Caco-2 (cell line): ENCODE measurements at regions of chr12 and their contacts with region 1.

Region 1: DNA sequence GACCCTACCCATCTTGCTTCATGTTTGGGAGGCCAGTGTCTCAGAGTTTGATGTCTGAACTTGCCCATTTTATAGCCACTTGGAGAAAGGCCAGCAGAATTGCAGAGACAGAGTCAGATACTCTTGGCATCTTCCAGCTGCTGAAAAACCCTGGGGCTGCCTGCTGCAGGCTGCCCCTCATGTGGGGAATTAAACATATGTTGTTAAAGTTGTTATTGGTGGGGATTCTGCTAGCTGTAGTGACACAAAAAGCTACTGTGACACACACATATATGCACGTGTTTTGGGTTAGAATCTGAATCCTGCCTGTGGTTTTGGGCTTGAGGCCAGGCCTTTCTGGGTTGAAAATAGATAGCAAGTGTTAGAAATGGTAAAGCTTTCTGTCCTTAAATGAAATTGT is 1288.4 kb downstream of the AACS start:
- DNase-seq: no peak
- H3K4me3 ChIP-seq: no peak overlapping the region
- H3K4me3 Mint-ChIP-seq: no peak overlapping the region
- H3K27ac Mint-ChIP-seq: no peak overlapping the region
- H3K4me1 ChIP-seq: no peaks in the 10 kb centered on the region
- H3K4me1 Mint-ChIP-seq: no peaks in the 10 kb centered on the region
- H3K27me3 ChIP-seq: no peaks in the 10 kb centered on the region
- H3K27me3 Mint-ChIP-seq: no peaks in the 10 kb centered on the region
- CTCF ChIP-seq: no peak

Region 2: DNA sequence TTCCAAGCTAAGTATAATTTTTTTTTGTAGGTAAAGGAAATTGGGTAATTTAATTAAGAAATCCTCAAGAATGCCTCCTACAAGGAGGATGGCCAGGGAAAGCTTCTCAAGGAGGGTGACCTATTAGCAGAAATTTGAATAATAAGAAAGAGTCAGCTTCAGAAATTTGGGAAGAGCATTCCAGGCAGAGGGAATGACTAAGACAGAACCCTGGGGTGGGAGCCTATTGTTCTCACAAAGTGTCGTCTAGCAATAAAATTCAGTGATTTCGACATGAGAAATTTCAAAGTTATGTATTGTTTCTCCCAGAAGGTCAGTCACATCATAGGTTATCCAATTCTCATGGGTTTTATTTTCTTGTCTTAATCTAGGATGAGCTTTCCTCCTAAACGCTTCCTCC is 120.0 kb before region 1 on chr12:
- CTCF ChIA-PET with region 1: no interaction called
- POLR2A ChIA-PET with region 1: no interaction called
- intact Hi-C with region 1: no loop called
- DNase-seq: no peak
- H3K4me3 ChIP-seq: no peak overlapping the region
- H3K4me3 Mint-ChIP-seq: no peak overlapping the region
- H3K27ac Mint-ChIP-seq: no peak overlapping the region
- H3K4me1 ChIP-seq: no peaks in the 10 kb centered on the region
- H3K4me1 Mint-ChIP-seq: no peaks in the 10 kb centered on the region
- H3K27me3 ChIP-seq: no peaks in the 10 kb centered on the region
- H3K27me3 Mint-ChIP-seq: no peaks in the 10 kb centered on the region
- CTCF ChIP-seq: no peak

Region 3: GRCh38 chr12:126337556-126338441 is 15.8 kb before region 1 on chr12:
- CTCF ChIA-PET with region 1: no interaction called
- POLR2A ChIA-PET with region 1: no interaction called
- intact Hi-C with region 1: loop called (anchors 1 kb)
- DNase-seq: no peak
- H3K4me3 ChIP-seq: no peak overlapping the region
- H3K4me3 Mint-ChIP-seq: no peak overlapping the region
- H3K27ac Mint-ChIP-seq: no peak overlapping the region
- H3K4me1 ChIP-seq: no peaks in the 10 kb centered on the region
- H3K4me1 Mint-ChIP-seq: no peaks in the 10 kb centered on the region
- H3K27me3 ChIP-seq: no peaks in the 10 kb centered on the region
- H3K27me3 Mint-ChIP-seq: no peaks in the 10 kb centered on the region
- CTCF ChIP-seq: no peak

Region 4: GRCh38 chr12:126389220-126389841 is 35.7 kb after region 1 on chr12:
- CTCF ChIA-PET with region 1: no interaction called
- POLR2A ChIA-PET with region 1: no interaction called
- intact Hi-C with region 1: no loop called
- DNase-seq: no peak
- H3K4me3 ChIP-seq: no peak overlapping the region
- H3K4me3 Mint-ChIP-seq: no peak overlapping the region
- H3K27ac Mint-ChIP-seq: no peak overlapping the region
- H3K4me1 ChIP-seq: no peaks in the 10 kb centered on the region
- H3K4me1 Mint-ChIP-seq: no peaks in the 10 kb centered on the region
- H3K27me3 ChIP-seq: no peaks in the 10 kb centered on the region
- H3K27me3 Mint-ChIP-seq: peaks cover 2% of the 10 kb centered on the region
- CTCF ChIP-seq: no peak

Region 5: DNA sequence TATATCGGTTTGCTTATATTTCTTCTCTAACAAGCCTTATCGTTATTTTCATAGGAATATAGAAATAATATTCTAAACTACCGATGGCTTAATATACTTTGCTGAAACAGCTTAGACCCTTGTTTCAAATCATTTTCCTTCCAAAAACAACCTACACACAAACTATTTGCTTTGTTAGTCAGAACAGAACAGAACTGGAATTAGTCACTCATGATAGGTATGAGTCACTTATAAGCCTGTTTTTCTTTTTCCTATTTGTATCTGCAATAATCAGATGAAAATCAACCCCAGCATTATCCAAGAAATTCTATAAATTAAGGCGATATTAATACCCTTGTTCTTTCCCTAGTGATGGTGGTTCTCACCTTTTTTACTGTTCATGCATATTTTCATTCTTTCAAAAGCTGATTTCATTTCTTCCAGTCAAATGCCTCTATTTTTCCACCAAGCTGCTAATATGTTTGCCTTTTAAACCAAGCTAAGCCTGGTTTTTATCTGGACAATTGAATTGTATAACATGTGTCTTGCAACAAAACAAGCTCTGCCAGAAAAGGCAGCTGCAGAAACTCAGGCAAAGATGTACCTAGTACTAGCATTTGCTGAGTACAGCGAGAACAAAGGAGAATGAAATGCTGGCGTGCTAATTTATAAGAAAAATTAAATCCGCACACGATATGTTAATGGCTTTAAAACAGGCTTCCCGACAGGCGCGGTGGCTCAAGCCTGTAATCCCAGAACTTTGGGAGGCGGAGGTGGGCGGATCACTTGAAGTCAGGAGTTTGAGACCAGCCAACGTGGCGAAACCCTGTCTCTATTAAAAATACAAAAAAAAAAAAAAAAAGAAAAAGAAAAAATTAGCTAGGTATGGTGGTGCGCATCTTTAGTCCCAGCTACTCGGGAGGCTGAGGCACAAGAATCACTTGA is 129.8 kb after region 1 on chr12:
- CTCF ChIA-PET with region 1: no interaction called
- POLR2A ChIA-PET with region 1: no interaction called
- intact Hi-C with region 1: no loop called
- DNase-seq: no peak
- H3K4me3 ChIP-seq: no peak overlapping the region
- H3K4me3 Mint-ChIP-seq: no peak overlapping the region
- H3K27ac Mint-ChIP-seq: no peak overlapping the region
- H3K4me1 ChIP-seq: no peaks in the 10 kb centered on the region
- H3K4me1 Mint-ChIP-seq: no peaks in the 10 kb centered on the region
- H3K27me3 ChIP-seq: no peaks in the 10 kb centered on the region
- H3K27me3 Mint-ChIP-seq: no peaks in the 10 kb centered on the region
- CTCF ChIP-seq: no peak